ENCODE measurements at regions of chr11 and their contacts with region 1.

Region 1: GRCh38 chr11:47373876-47374720 is 4.2 kb downstream of the SPI1 start:
- DNase-seq: peak; percentile 68 to 96 (median 82)
- ATAC-seq: peak; percentile 88 to 95 (median 90)
- H3K4me3 ChIP-seq: no peak overlapping the region
- H3K27ac ChIP-seq: no peak overlapping the region
- H3K4me1 ChIP-seq: no peaks in the 10 kb centered on the region
- H3K27me3 ChIP-seq: no peaks in the 10 kb centered on the region
- CTCF ChIP-seq: peak; percentile 83 to 95 (median 91)

Region 2: GRCh38 chr11:47443042-47443700 is 69.1 kb after region 1 on chr11:
- intact Hi-C with region 1: loop called in 2 of 3 experiments (anchors 5 to 10 kb)
- DNase-seq: no peak
- ATAC-seq: peak in 1 of 4 donors; percentile 38
- H3K4me3 ChIP-seq: no peak overlapping the region
- H3K27ac ChIP-seq: no peak overlapping the region
- H3K4me1 ChIP-seq: no peaks in the 10 kb centered on the region
- H3K27me3 ChIP-seq: no peaks in the 10 kb centered on the region
- CTCF ChIP-seq: no peak

Region 3: GRCh38 chr11:47448566-47449427 is 74.7 kb after region 1 on chr11 and contains the start of gene RAPSN:
- intact Hi-C with region 1: loop called in 2 of 3 experiments (anchors 5 to 10 kb)
- DNase-seq: peak in 3 of 6 donors; percentile 22 to 76 (median 41)
- ATAC-seq: peak in 3 of 4 donors; percentile 59 to 82 (median 75)
- H3K4me3 ChIP-seq: no peak within 1 kb of the TSS
- H3K27ac ChIP-seq: no peak within 1 kb of the TSS
- H3K4me1 ChIP-seq: no peaks in the 10 kb centered on the region
- H3K27me3 ChIP-seq: no peaks in the 10 kb centered on the region
- CTCF ChIP-seq: no peak
- total RNA-seq, gene RAPSN: 0.18 to 0.56 (median 0.30) TPM

Measured in pancreas (tissue), 10 donors.